SK-N-SH (cell line): ENCODE measurements at regions of chr5 and their contacts with region 1.

Region 1: DNA sequence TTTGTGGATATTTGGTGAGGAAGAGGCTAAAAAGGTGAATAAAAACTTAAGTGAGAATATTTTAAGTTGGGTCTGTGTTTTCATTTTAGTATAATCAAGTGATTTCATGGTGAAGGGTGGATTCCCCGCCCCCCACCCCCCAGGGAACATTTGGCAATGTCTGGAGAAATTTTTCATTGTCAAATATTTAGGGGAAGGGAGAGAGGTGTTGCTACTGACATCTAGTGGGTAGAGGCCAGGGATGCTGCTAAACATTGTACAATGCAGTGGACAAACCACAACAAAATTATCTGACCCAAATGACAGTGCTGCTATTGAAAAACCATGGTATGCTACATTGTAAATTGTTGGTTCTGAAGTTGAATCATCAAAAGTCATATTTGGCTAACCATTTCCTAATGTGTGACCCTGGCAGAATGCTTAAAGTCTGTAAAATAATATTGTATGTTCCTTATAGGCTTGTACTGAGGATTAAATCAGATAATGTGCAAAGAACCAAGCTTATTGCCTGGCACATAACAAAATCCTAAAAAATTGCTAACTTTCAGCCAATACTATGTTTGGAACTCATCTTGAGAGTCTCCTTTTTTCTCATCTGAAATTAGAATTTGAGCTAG is 5.6 kb downstream of the C5orf24 start:
- DNase-seq: peak; percentile 40
- H3K4me3 ChIP-seq: no peak overlapping the region
- H3K27ac ChIP-seq: peak overlapping the region; percentile 3 to 42; a peak in 2 of 4 replicates
- H3K4me1 ChIP-seq: peaks cover 6 to 24% of the 10 kb centered on the region in 2 experiments
- H3K27me3 ChIP-seq: no peaks in the 10 kb centered on the region
- CTCF ChIP-seq: peak; percentile 67
- EP300 ChIP-seq: no peak
- RAD21 ChIP-seq: peak; percentile 48

Region 2: GRCh38 chr5:134837530-134838181 is 13.8 kb before region 1 on chr5:
- CTCF ChIA-PET with region 1: no interaction called
- POLR2A ChIA-PET with region 1: no interaction called
- DNase-seq: no peak
- H3K4me3 ChIP-seq: no peak overlapping the region
- H3K27ac ChIP-seq: no peak overlapping the region
- H3K4me1 ChIP-seq: peaks cover 0 to 2% of the 10 kb centered on the region in 2 experiments; a peak in 1 of 4 replicates
- H3K27me3 ChIP-seq: no peaks in the 10 kb centered on the region
- CTCF ChIP-seq: no peak
- EP300 ChIP-seq: no peak
- RAD21 ChIP-seq: no peak

Region 3: DNA sequence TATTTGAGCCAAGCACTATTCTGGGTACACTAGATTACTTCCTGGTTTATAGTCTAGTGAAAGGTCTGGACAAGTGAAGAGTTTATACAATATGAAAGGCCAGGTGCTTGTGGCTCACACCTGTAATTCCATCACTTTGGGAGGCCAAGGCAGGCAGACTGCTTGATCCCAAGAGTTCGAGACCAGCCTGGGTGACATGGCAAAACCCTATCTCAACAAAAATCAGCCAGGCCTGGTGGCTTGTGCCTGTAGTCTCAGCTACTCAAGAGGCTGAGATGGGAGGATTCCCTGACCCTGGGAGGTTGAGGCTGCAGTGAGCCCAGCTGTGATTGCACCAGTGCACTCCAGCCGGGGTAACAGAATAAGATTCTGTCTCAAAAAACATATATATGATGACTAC is 13.3 kb after region 1 on chr5:
- CTCF ChIA-PET with region 1: interaction called, 16 read pairs
- POLR2A ChIA-PET with region 1: no interaction called
- DNase-seq: no peak
- H3K4me3 ChIP-seq: no peak overlapping the region
- H3K27ac ChIP-seq: no peak overlapping the region
- H3K4me1 ChIP-seq: no peaks in the 10 kb centered on the region
- H3K27me3 ChIP-seq: no peaks in the 10 kb centered on the region
- CTCF ChIP-seq: no peak
- EP300 ChIP-seq: no peak
- RAD21 ChIP-seq: no peak

Region 4: DNA sequence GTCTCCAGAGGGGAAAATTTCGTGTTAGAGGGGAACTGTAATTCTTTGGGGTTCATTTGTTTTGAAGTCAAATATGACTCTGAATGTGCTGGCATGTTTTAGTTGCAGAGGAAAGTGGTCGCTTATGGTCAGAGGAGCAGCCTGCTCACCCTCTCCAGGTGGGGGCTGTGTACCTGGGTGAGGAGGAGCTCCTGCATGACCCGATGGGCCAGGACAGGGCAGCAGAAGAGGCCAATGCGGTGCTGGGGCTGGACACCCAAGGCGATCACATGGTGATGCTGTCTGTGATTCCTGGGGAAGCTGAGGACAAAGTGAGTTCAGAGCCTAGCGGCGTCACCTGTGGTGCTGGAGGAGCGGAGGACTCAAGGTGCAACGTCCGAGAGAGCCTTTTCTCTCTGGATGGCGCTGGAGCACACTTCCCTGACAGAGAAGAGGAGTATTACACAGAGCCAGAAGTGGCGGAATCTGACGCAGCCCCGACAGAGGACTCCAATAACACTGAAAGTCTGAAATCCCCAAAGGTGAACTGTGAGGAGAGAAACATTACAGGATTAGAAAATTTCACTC is 36.3 kb after region 1 on chr5:
- CTCF ChIA-PET with region 1: no interaction called
- POLR2A ChIA-PET with region 1: no interaction called
- DNase-seq: no peak
- H3K4me3 ChIP-seq: no peak overlapping the region
- H3K27ac ChIP-seq: no peak overlapping the region
- H3K4me1 ChIP-seq: no peaks in the 10 kb centered on the region
- H3K27me3 ChIP-seq: no peaks in the 10 kb centered on the region
- CTCF ChIP-seq: no peak
- EP300 ChIP-seq: no peak
- RAD21 ChIP-seq: no peak

Region 5: DNA sequence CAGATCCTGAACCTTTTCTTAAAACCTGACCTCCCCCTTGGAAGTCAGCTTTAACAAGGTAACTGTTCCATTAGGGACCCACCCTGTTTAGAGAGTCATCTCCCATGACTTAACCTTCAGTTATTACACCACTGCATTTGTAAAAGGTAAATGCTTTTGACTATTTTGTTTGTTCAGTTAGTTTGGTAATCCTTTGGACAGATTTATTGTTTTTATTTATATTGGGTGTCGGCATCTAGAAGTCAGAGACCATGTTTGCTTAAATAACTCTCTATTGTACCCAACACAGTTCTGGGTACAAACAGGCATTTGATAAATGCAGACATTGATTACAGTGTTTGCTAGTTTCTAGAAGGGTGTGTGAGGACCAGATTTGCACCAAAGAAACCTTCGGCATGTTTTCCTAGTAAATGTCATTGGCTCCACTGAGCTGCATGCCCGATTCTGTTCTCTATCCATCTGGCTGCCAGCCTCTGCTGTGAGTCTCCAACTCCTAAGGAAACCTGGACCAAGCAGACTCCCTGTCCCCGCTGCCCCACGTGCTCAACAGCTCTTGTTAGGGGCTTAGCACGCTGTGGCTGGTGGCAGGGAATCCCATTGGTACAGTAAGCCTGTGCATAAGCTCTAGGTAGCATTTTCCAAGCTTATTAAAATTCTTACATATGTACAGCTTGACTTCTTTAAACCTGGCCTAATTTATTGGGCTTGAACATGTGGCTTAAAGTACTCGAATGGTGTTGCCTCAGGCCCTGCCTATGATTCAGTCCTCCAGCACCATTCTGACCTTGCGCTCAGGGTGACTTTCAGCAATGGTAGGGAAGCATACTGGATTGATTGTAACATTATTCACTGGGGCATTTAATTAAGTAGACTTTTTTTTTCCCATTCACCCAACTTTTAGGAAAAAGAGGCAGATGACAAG is 60.1 kb after region 1 on chr5:
- CTCF ChIA-PET with region 1: no interaction called
- POLR2A ChIA-PET with region 1: no interaction called
- DNase-seq: no peak
- H3K4me3 ChIP-seq: no peak overlapping the region
- H3K27ac ChIP-seq: no peak overlapping the region
- H3K4me1 ChIP-seq: no peaks in the 10 kb centered on the region
- H3K27me3 ChIP-seq: no peaks in the 10 kb centered on the region
- CTCF ChIP-seq: no peak
- EP300 ChIP-seq: no peak
- RAD21 ChIP-seq: no peak

Region 6: DNA sequence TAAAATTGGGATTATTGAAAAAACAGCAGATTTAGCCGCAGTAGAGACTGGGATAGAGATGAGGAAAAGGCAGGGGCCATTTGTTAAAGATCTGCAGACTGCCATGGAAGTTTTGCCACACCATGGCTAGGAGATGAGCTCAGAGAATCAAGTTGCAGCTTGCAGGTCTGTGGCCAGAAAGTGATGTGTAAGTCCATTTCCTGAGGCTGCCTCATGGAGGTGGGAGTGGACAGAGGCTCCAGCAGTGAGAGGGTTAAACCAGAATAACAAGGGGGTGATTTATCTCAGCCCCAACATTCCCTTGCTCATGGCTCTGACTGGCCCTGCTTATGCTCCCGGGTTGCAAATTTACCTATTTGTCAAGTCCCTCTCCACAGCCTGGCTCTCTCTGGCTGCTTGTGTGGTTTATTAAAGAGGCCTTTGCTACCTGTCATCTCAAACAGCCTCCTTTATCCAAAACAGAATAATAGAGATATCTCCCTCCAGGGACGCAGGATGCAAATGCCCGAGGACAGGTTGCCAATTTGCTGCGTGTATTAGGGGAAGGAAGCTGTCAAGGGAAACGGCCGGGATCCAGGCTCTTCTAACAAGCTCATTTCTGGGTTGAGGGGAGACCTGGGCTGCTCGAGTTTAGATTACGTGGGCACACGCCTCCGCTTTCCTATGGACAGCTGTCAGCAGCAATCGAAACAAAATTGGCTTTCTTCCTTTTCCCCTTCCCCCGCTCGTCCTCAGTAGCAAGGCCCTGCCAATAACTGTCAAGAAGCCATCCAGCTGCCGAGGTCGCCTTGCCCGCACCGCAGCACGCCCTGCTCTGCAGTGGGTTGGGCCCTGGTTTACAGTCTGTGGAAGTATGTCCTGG is 255.4 kb after region 1 on chr5:
- CTCF ChIA-PET with region 1: no interaction called
- POLR2A ChIA-PET with region 1: no interaction called
- DNase-seq: no peak
- H3K4me3 ChIP-seq: no peak overlapping the region
- H3K27ac ChIP-seq: no peak overlapping the region
- H3K4me1 ChIP-seq: no peaks in the 10 kb centered on the region; a peak in 1 of 4 replicates
- H3K27me3 ChIP-seq: peaks cover 18% of the 10 kb centered on the region; the same call in 1 of the 2 replicates
- CTCF ChIP-seq: no peak
- EP300 ChIP-seq: no peak
- RAD21 ChIP-seq: no peak